ENCODE measurements at regions of chr1 and their contacts with region 1.

Region 1: GRCh38 chr1:150979092-150980056 is 2.7 kb upstream of the ANXA9 start:
- DNase-seq: peak; percentile 72
- ATAC-seq: peak; percentile 59
- H3K4me3 Mint-ChIP-seq: peak overlapping the region; percentile 69
- H3K27ac Mint-ChIP-seq: peak overlapping the region; percentile 57
- H3K4me1 Mint-ChIP-seq: peaks cover 35% of the 10 kb centered on the region
- H3K27me3 Mint-ChIP-seq: no peaks in the 10 kb centered on the region
- CTCF ChIP-seq: peak; percentile 100

Region 2: GRCh38 chr1:150464422-150464826 is 515.0 kb before region 1 on chr1:
- CTCF ChIA-PET with region 1: no interaction called
- POLR2A ChIA-PET with region 1: no interaction called
- intact Hi-C with region 1: loop called (anchors 1 kb)
- DNase-seq: peak; percentile 32
- ATAC-seq: peak; percentile 80
- H3K4me3 Mint-ChIP-seq: no peak overlapping the region
- H3K27ac Mint-ChIP-seq: no peak overlapping the region
- H3K4me1 Mint-ChIP-seq: peaks cover 4% of the 10 kb centered on the region
- H3K27me3 Mint-ChIP-seq: no peaks in the 10 kb centered on the region
- CTCF ChIP-seq: no peak

Region 3: GRCh38 chr1:150486964-150487762 is 492.2 kb before region 1 on chr1 and contains the start of gene TARS2:
- CTCF ChIA-PET with region 1: no interaction called
- POLR2A ChIA-PET with region 1: no interaction called
- intact Hi-C with region 1: loop called (anchors 1 kb)
- DNase-seq: peak; percentile 78
- ATAC-seq: peak; percentile 100
- H3K4me3 Mint-ChIP-seq: peak within 1 kb of the TSS; percentile 96
- H3K27ac Mint-ChIP-seq: peak within 1 kb of the TSS; percentile 98
- H3K4me1 Mint-ChIP-seq: peaks cover 18% of the 10 kb centered on the region
- H3K27me3 Mint-ChIP-seq: no peaks in the 10 kb centered on the region
- CTCF ChIP-seq: no peak
- total RNA-seq, gene TARS2: 42.6 and 50.7 TPM in 2 replicates

Region 4: GRCh38 chr1:150760013-150760412 is 219.4 kb before region 1 on chr1:
- CTCF ChIA-PET with region 1: no interaction called
- POLR2A ChIA-PET with region 1: interaction called, 9 read pairs
- intact Hi-C with region 1: loop called (anchors 1 kb)
- DNase-seq: no peak
- ATAC-seq: peak; percentile 56
- H3K4me3 Mint-ChIP-seq: peak overlapping the region; percentile 21
- H3K27ac Mint-ChIP-seq: peak overlapping the region; percentile 72
- H3K4me1 Mint-ChIP-seq: peaks cover 46% of the 10 kb centered on the region
- H3K27me3 Mint-ChIP-seq: no peaks in the 10 kb centered on the region
- CTCF ChIP-seq: no peak

Region 5: DNA sequence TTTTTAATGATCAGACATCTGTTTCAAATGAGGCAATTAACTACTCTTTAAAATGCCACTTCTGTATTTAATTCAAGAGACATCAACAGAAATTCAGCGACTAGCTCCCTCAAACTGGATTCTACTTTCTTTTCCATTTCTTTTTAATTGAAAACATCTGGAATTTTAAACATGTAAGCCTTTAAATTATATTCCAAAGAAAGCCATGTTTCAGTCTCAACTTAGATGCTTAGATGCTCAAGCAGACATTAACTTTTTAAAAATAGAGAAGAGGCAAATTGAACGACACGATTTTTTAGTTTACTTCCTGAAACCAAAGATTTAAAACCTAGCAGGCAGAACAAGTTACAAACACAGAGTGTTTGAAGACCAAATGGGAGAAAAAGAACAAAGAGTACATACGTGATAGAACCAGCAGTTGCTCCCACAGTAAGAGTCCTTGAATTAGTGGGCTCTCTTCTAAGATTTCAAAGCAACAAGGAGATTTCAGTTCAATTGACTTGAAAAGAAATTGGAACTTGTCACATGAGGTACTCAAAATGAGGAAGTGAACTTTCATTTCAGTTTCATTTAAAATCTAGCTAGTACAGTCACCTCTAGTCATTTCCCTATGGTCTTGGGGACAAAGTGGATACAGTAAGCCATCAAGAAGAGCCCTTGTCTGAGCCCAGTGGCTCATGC is 213.9 kb before region 1 on chr1 and contains the start of gene CTSS:
- CTCF ChIA-PET with region 1: no interaction called
- POLR2A ChIA-PET with region 1: interaction called, 9 read pairs
- intact Hi-C with region 1: loop called (anchors 1 kb)
- DNase-seq: no peak
- ATAC-seq: peak; percentile 88
- H3K4me3 Mint-ChIP-seq: peak within 1 kb of the TSS; percentile 93
- H3K27ac Mint-ChIP-seq: peak within 1 kb of the TSS; percentile 97
- H3K4me1 Mint-ChIP-seq: peaks cover 55% of the 10 kb centered on the region
- H3K27me3 Mint-ChIP-seq: no peaks in the 10 kb centered on the region
- CTCF ChIP-seq: no peak
- total RNA-seq, gene CTSS: 162 and 165 TPM in 2 replicates

Region 6: GRCh38 chr1:150876119-150876454 is 103.3 kb before region 1 on chr1:
- CTCF ChIA-PET with region 1: no interaction called
- POLR2A ChIA-PET with region 1: interaction called, 5 read pairs
- intact Hi-C with region 1: loop called (anchors 1 kb)
- DNase-seq: no peak
- ATAC-seq: peak; percentile 32
- H3K4me3 Mint-ChIP-seq: peak overlapping the region; percentile 92
- H3K27ac Mint-ChIP-seq: peak overlapping the region; percentile 88
- H3K4me1 Mint-ChIP-seq: peaks cover 31% of the 10 kb centered on the region
- H3K27me3 Mint-ChIP-seq: no peaks in the 10 kb centered on the region
- CTCF ChIP-seq: no peak

Region 7: GRCh38 chr1:151710187-151710840 is 730.9 kb after region 1 on chr1:
- CTCF ChIA-PET with region 1: no interaction called
- POLR2A ChIA-PET with region 1: no interaction called
- intact Hi-C with region 1: no loop called
- DNase-seq: no peak
- ATAC-seq: no peak
- H3K4me3 Mint-ChIP-seq: no peak overlapping the region
- H3K27ac Mint-ChIP-seq: no peak overlapping the region
- H3K4me1 Mint-ChIP-seq: peaks cover 5% of the 10 kb centered on the region
- H3K27me3 Mint-ChIP-seq: peaks cover 5% of the 10 kb centered on the region
- CTCF ChIP-seq: no peak